Endothelial cell of umbilical vein (primary cell): ENCODE measurements at regions of chr7 and their contacts with region 1.

Region 1: GRCh38 chr7:128209229-128210035 is 31.6 kb upstream of the LEP start:
- DNase-seq: peak; percentile 77
- H3K4me3 ChIP-seq: no peak overlapping the region
- H3K27ac ChIP-seq: no peak overlapping the region
- H3K4me1 ChIP-seq: no peaks in the 10 kb centered on the region
- H3K27me3 ChIP-seq: peaks cover 10 to 24% of the 10 kb centered on the region in 2 experiments
- CTCF ChIP-seq: peak; percentile 93 to 97
- POLR2A ChIP-seq: no peak

Region 2: GRCh38 chr7:127347567-127348246 is 861.7 kb before region 1 on chr7:
- CTCF ChIA-PET with region 1: interaction called, 27 read pairs
- POLR2A ChIA-PET with region 1: no interaction called
- dilution Hi-C with region 1: no loop called
- intact Hi-C with region 1: loop called (anchors 2 kb)
- DNase-seq: peak; percentile 70
- H3K4me3 ChIP-seq: peak overlapping the region; percentile 29 to 63 (median 35)
- H3K27ac ChIP-seq: no peak overlapping the region
- H3K4me1 ChIP-seq: peaks cover 8% of the 10 kb centered on the region
- H3K27me3 ChIP-seq: no peaks in the 10 kb centered on the region
- CTCF ChIP-seq: peak; percentile 51 to 56
- POLR2A ChIP-seq: no peak

Region 3: DNA sequence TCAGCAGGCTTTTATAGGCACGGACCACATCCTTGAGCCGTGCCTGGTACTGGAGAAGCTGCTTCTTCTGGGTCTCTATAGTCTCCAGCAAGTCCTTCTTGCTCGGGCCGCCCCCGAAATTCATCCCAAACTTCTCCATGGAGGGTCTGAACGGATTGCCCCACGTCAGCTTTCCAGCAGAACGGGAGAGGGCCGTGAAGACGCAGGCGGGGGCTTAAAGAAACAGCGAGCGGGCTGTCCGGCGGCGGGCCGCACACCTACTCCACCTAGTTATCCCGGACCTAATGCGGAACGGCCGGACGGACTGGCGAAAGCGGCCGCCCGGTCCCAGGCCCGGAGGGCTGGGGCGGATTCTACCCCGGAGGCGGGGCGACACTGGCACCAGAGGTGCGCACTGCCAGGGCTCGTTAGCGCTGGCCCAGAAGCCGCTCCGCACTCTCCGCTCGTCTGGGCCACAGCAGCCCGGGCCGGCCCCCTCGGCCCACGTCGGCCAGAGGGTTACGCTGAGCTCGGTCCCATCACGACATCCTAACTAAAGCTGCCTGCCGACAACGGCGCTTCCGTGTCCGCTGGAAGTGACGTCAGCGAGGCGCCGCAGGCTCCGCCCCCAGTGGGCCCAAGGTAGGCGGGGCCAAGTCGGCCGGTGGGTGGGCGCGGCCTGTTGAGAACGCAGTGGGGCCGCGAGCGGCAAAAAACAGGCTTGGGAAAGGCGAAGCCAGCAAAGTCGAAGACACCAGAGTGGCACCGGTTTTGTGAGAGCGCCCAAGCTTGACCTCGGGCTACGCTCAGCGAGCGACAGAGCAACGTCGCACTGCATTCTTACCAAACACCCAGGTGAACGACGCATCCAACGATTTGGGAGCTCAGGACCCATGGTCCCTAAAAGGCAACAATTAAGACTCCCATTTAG is 624.1 kb before region 1 on chr7 and contains the start of gene GCC1:
- CTCF ChIA-PET with region 1: interaction called, 41 read pairs
- POLR2A ChIA-PET with region 1: no interaction called
- dilution Hi-C with region 1: no loop called
- intact Hi-C with region 1: loop called (anchors 2 kb)
- DNase-seq: peak; percentile 94
- H3K4me3 ChIP-seq: peak within 1 kb of the TSS; percentile 87 to 95 (median 94)
- H3K27ac ChIP-seq: peak within 1 kb of the TSS; percentile 60
- H3K4me1 ChIP-seq: peaks cover 37% of the 10 kb centered on the region
- H3K27me3 ChIP-seq: no peaks in the 10 kb centered on the region
- CTCF ChIP-seq: no peak
- POLR2A ChIP-seq: peak; percentile 91
- total RNA-seq, gene GCC1: 14.5 and 15.5 TPM in 2 replicates

Region 4: DNA sequence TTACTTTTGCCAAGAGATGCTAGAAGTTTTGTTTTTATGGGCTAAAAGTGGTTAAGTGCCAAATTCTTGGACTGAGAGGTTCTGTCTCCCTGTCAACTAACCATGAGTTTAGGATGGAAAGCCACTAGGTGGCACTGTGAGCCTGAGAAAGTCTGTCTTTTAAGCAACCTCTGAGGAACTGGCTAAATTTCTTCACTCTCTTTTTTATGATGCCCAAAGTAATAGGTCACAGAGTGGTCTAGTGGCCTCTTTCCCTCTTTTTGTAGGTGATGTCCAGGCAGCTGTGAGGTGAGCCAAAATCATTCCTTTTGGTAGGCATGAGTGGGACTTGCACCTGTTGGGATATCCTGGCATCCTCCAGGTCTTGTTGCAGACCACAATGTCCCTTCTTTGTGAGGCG is 500.6 kb before region 1 on chr7:
- CTCF ChIA-PET with region 1: interaction called, 229 read pairs
- POLR2A ChIA-PET with region 1: no interaction called
- dilution Hi-C with region 1: loop called (anchors 25 kb)
- intact Hi-C with region 1: loop called (anchors 1 kb)
- DNase-seq: peak; percentile 81
- H3K4me3 ChIP-seq: no peak overlapping the region
- H3K27ac ChIP-seq: no peak overlapping the region
- H3K4me1 ChIP-seq: peaks cover 5% of the 10 kb centered on the region
- H3K27me3 ChIP-seq: no peaks in the 10 kb centered on the region
- CTCF ChIP-seq: peak; percentile 62 to 63
- POLR2A ChIP-seq: no peak

Region 5: GRCh38 chr7:127920787-127921438 is 288.5 kb before region 1 on chr7:
- CTCF ChIA-PET with region 1: no interaction called
- POLR2A ChIA-PET with region 1: no interaction called
- dilution Hi-C with region 1: no loop called
- intact Hi-C with region 1: no loop called
- DNase-seq: no peak
- H3K4me3 ChIP-seq: no peak overlapping the region
- H3K27ac ChIP-seq: no peak overlapping the region
- H3K4me1 ChIP-seq: no peaks in the 10 kb centered on the region
- H3K27me3 ChIP-seq: no peaks in the 10 kb centered on the region
- CTCF ChIP-seq: no peak
- POLR2A ChIP-seq: no peak

Region 6: DNA sequence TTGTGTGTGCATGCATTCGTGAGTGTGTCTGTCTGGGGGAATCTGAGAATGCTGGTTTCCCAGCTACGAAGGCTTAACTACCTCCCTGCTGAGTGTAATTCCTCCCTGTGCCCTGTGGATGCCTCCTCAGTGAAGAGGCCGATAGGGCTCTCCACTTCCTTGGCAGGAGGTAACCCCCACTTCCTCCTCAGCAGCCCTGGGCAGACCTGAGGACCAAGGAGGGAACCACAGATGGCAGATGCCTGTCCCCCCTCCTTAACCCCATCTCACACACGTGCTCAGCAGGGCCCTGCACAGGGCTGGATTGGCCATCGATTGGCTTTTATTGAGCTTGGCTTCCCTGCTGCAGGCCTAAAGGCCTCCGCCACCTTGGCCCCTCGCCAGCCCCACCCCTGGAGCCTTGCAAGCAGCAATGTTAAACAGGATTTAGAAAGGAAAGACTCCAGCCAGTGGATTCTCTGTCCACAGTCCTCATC is 132.6 kb before region 1 on chr7:
- CTCF ChIA-PET with region 1: interaction called, 10 read pairs
- POLR2A ChIA-PET with region 1: no interaction called
- dilution Hi-C with region 1: no loop called
- intact Hi-C with region 1: no loop called
- DNase-seq: no peak
- H3K4me3 ChIP-seq: no peak overlapping the region
- H3K27ac ChIP-seq: no peak overlapping the region
- H3K4me1 ChIP-seq: peaks cover 18% of the 10 kb centered on the region
- H3K27me3 ChIP-seq: no peaks in the 10 kb centered on the region
- CTCF ChIP-seq: no peak
- POLR2A ChIP-seq: no peak

Region 7: DNA sequence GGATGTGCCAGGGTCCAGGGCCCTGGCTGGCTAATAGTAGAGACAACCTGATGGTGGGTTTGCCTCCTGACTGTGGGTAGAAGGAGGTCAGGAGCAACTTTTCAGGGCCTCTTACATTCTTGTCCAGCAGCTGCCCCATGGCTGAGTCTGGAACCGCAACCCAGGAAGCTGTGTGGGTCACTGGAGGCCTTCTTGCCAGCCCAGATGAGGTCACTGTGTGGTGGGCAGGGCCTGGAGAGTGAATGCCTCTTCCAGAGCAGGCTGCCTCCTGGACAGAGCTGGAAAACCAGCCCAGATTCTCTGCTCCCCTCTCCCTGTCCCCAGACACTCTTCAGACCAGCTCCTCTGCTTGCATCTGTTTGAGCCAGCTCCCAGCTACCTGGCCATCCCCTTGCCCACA is 11.8 kb before region 1 on chr7:
- CTCF ChIA-PET with region 1: interaction called, 16 read pairs
- POLR2A ChIA-PET with region 1: no interaction called
- dilution Hi-C with region 1: no loop called
- intact Hi-C with region 1: no loop called
- DNase-seq: no peak
- H3K4me3 ChIP-seq: no peak overlapping the region
- H3K27ac ChIP-seq: no peak overlapping the region
- H3K4me1 ChIP-seq: no peaks in the 10 kb centered on the region
- H3K27me3 ChIP-seq: peaks cover 29 to 47% of the 10 kb centered on the region in 2 experiments
- CTCF ChIP-seq: no peak
- POLR2A ChIP-seq: no peak